Mammary epithelial cell (primary cell): ENCODE measurements at regions of chr12 and their contacts with region 1.

Region 1: DNA sequence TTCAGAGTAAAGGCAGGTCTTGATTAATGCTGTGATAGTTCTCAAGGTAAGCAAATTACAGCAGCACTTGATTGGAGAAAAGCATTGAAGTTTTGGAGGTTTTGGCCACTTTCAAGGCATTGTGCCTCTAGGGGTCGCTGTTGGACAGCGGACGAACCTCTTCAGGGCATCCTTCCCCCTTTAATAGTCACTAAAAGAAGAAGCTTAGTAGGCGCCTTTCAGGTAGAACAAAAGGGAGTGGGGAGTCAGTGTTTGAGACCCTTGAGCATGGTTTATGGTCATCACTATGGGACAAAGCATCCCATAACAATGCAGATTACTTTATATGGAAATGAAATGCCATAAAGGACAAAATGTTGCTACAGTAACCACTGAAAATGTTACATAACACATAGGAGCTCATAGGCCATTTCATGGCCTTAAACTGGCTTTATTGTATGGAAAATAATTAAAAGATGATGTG is 199.5 kb upstream of the DCN start:
- DNase-seq: peak; percentile 72
- H3K4me3 ChIP-seq: peak overlapping the region; percentile 39 to 45 (median 43)
- H3K27ac ChIP-seq: no peak overlapping the region
- H3K4me1 ChIP-seq: peaks cover 6% of the 10 kb centered on the region
- H3K27me3 ChIP-seq: no peaks in the 10 kb centered on the region
- CTCF ChIP-seq: peak; percentile 65 to 90

Region 2: GRCh38 chr12:91577586-91578539 is 195.8 kb after region 1 on chr12:
- CTCF ChIA-PET with region 1: no interaction called
- dilution Hi-C with region 1: no loop called
- in situ Hi-C with region 1: no loop called
- intact Hi-C with region 1: loop called (anchors 2 kb)
- DNase-seq: peak; percentile 37
- H3K4me3 ChIP-seq: peak overlapping the region in 2 of 3 experiments; percentile 38 to 46
- H3K27ac ChIP-seq: no peak overlapping the region
- H3K4me1 ChIP-seq: no peaks in the 10 kb centered on the region
- H3K27me3 ChIP-seq: no peaks in the 10 kb centered on the region
- CTCF ChIP-seq: peak; percentile 56 to 58

Region 3: GRCh38 chr12:91811481-91812287 is 429.6 kb after region 1 on chr12:
- CTCF ChIA-PET with region 1: no interaction called
- dilution Hi-C with region 1: no loop called
- in situ Hi-C with region 1: no loop called
- intact Hi-C with region 1: loop called (anchors 2 kb)
- DNase-seq: peak; percentile 39
- H3K4me3 ChIP-seq: no peak overlapping the region
- H3K27ac ChIP-seq: no peak overlapping the region
- H3K4me1 ChIP-seq: peaks cover 6% of the 10 kb centered on the region
- H3K27me3 ChIP-seq: no peaks in the 10 kb centered on the region
- CTCF ChIP-seq: peak; percentile 75 to 79

Region 4: GRCh38 chr12:92007787-92008186 is 625.7 kb after region 1 on chr12:
- CTCF ChIA-PET with region 1: no interaction called
- dilution Hi-C with region 1: no loop called
- in situ Hi-C with region 1: no loop called
- intact Hi-C with region 1: loop called (anchors 5 kb)
- DNase-seq: no peak
- H3K4me3 ChIP-seq: no peak overlapping the region
- H3K27ac ChIP-seq: no peak overlapping the region
- H3K4me1 ChIP-seq: no peaks in the 10 kb centered on the region
- H3K27me3 ChIP-seq: no peaks in the 10 kb centered on the region
- CTCF ChIP-seq: no peak

Region 5: DNA sequence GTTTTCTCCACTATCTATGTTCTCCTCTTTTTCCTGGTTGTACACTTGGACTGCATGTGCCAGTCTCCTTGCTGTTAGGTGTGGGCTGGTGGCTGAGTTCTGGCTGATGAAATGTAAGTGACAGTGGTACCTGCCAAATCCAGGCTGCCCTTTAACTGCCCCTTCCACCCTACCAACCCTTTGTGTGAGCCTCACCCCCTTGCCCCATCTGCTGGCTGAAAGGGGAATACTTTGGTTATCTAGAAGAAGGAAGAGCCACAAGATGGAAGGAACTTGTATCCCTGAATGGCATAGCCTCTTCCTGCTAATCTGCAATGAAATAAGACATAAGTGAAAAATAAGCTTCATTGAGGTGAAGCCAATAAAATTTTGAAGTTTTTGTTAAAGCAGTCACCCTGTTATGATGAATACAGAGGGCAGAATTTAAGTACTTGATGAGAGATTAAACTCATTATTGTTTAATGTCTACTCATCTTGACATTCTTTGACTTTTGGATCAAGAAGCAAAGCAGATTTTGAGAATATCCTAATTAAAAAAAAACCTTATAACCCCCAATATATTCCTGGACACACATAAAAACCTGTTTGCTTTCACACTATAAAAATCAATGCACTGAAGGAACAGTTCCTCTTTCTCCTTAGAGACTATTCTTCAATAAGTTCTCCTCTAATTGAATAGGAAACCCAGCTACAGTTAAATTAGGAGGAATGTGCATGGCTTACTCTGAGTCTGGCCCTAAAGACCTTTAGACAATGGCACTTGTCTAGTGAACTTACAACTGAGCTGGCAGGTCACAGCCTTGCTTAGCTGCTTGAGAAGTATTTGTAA is 1026.2 kb after region 1 on chr12:
- CTCF ChIA-PET with region 1: interaction called, 3 read pairs
- dilution Hi-C with region 1: no loop called
- in situ Hi-C with region 1: loop called in 1 of 2 experiments (anchors 25 kb)
- intact Hi-C with region 1: loop called (anchors 1 kb)
- DNase-seq: peak; percentile 55
- H3K4me3 ChIP-seq: no peak overlapping the region
- H3K27ac ChIP-seq: no peak overlapping the region
- H3K4me1 ChIP-seq: no peaks in the 10 kb centered on the region
- H3K27me3 ChIP-seq: no peaks in the 10 kb centered on the region
- CTCF ChIP-seq: peak; percentile 66 to 75

Region 6: DNA sequence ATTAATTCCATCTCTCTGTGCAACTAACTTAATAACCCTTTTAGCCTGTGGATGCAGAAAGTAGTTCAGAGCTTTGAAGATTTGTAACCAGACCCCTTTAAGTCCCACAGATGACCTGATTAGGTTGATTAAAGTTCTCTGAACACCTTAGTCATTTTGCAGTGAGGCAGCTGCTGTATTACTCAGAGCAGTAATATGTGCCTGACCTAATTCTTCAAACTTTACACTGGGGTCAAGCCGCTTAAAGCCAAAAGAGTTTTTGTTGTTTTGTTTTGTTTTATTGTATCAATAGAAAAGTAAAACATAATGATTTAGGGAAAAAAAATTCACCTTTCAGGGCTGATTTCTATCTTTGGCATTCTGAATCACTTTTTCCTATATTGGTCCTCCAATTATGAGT is 1242.1 kb after region 1 on chr12:
- CTCF ChIA-PET with region 1: interaction called, 15 read pairs
- dilution Hi-C with region 1: no loop called
- in situ Hi-C with region 1: loop called in 1 of 2 experiments (anchors 25 kb)
- intact Hi-C with region 1: no loop called
- DNase-seq: peak; percentile 81
- H3K4me3 ChIP-seq: no peak overlapping the region
- H3K27ac ChIP-seq: peak overlapping the region; percentile 42
- H3K4me1 ChIP-seq: peaks cover 19% of the 10 kb centered on the region
- H3K27me3 ChIP-seq: no peaks in the 10 kb centered on the region
- CTCF ChIP-seq: no peak